ENCODE measurements at regions of chr17 and their contacts with region 1.

Region 1: GRCh38 chr17:38333635-38334295 is 10.0 kb downstream of the GPR179 start:
- DNase-seq: peak; percentile 67

Region 2: DNA sequence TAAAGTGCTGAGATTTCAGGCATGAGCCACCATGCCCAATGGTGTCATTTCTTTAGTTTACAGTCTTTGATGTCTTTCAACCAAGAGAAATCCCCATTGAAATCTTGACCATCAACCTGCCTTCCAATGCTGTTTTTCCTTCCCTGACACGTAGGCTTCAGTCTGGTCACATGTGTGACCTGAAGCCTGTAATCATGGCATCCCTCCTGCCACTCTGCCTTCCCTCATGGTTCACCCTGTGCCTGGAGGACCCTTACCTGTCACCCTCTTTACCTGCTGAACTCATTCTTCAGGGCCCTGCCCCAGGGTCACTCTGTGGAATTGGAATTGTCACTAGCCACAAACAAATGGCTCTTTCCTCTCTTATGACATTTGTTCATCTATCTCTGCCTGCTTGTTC is 76.4 kb after region 1 on chr17:
- in situ Hi-C with region 1: loop called (anchors 5 kb)
- DNase-seq: no peak

Region 3: DNA sequence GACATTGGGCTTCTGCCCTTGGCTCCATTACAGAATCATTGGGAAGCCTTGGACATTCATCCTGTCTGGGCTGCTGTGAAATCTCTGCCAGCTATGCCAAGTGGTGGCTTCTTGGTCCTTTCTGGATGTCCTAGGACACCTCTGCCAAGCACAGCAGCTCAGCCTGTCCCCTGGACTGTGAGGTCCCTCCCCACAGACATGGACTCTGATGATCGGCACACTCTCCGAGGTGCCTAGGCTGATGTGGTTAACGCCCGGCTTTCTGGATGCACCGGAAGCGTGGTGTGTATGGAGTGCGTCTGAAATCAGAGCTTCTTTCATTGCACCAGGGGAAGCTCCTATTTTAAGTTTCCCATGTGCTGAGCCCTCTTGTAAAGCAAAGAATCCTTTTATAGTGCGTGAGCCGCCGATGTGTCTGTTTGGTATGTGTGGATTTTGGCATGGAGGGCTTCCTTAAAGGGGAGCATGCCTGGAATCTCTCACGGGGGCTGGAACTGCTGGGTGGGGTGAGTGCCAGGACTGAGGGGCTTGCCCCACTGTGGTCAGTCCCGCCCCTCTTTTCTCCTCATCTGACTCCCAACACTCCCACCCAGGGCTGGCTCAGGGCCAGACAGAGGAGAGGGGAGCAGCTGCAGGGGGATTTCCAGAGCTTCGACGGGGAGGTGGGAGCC is 87.5 kb after region 1 on chr17:
- in situ Hi-C with region 1: no loop called
- DNase-seq: no peak

Region 4: DNA sequence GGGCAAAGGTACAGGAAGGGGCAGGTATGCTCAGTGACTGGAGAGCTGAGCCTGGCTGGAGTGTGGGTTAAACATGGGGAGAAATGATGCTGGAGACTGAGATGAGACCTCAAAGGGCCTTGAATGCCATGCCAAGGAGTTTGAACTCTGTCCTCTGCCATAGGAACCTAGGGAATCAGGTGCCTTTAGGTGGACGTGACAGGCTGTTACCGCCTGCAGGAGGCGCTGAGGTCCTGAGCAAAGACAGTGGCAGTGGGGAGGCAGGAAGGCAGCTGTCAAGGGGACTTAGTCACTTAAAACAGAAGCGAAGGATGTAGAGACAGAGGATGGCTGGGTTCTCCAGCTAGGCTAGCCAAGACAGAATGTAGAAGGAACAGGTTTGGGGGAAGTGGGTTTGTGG is 427.8 kb after region 1 on chr17:
- in situ Hi-C with region 1: no loop called
- DNase-seq: peak; percentile 62

Measured in KBM-7 (cell line).